CD8-positive, alpha-beta T cell (primary cell): ENCODE measurements at regions of chr12 and their contacts with region 1.

Region 1: GRCh38 chr12:47111392-47111778 is 31.6 kb upstream of the AMIGO2 start:
- DNase-seq: peak in 2 of 9 experiments; percentile 21 to 48
- ATAC-seq: peak; percentile 34
- H3K4me3 ChIP-seq: no peak overlapping the region
- H3K4me3 Mint-ChIP-seq: peak overlapping the region; percentile 53
- H3K27ac ChIP-seq: no peak overlapping the region
- H3K27ac Mint-ChIP-seq: peak overlapping the region; percentile 61
- H3K4me1 ChIP-seq: peaks cover 17% of the 10 kb centered on the region
- H3K4me1 Mint-ChIP-seq: peaks cover 31% of the 10 kb centered on the region
- H3K27me3 ChIP-seq: no peaks in the 10 kb centered on the region
- H3K27me3 Mint-ChIP-seq: no peaks in the 10 kb centered on the region
- CTCF ChIP-seq: no peak

Region 2: GRCh38 chr12:47071241-47071852 is 40.0 kb before region 1 on chr12:
- CTCF ChIA-PET with region 1: no interaction called
- POLR2A ChIA-PET with region 1: no interaction called
- intact Hi-C with region 1: loop called in 1 of 2 experiments (anchors 5 kb)
- DNase-seq: peak in 3 of 9 experiments; percentile 18 to 60 (median 46)
- ATAC-seq: peak; percentile 59
- H3K4me3 ChIP-seq: no peak overlapping the region
- H3K4me3 Mint-ChIP-seq: no peak overlapping the region
- H3K27ac ChIP-seq: no peak overlapping the region
- H3K27ac Mint-ChIP-seq: no peak overlapping the region
- H3K4me1 ChIP-seq: no peaks in the 10 kb centered on the region
- H3K4me1 Mint-ChIP-seq: peaks cover 9% of the 10 kb centered on the region
- H3K27me3 ChIP-seq: no peaks in the 10 kb centered on the region
- H3K27me3 Mint-ChIP-seq: no peaks in the 10 kb centered on the region
- CTCF ChIP-seq: peak; percentile 57

Region 3: DNA sequence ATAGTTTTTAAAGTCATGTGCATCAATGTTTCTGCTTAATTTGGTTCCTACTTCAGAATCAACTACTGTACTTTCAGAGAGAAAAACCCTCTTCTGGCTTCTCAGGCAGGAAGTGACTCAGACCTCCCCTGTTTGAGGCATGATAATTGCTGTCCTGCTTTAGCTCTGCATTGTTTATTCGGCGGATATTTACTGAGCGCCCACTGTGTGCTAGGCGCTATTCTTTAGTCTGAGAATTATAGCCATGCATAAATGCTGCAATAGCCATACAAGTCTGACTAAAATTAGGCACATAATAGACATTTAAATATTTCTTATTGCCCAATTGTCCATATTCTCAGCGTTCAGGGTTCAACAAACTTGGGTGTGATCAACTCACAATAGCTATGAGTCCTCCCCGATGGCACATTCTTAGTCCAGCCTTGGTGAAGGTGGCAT is 25.6 kb before region 1 on chr12:
- CTCF ChIA-PET with region 1: no interaction called
- POLR2A ChIA-PET with region 1: no interaction called
- intact Hi-C with region 1: no loop called
- DNase-seq: peak in 7 of 9 experiments; percentile 34 to 81 (median 44)
- ATAC-seq: peak; percentile 88
- H3K4me3 ChIP-seq: no peak overlapping the region
- H3K4me3 Mint-ChIP-seq: peak overlapping the region; percentile 3
- H3K27ac ChIP-seq: peak overlapping the region in 1 of 2 experiments; percentile 63
- H3K27ac Mint-ChIP-seq: peak overlapping the region; percentile 49
- H3K4me1 ChIP-seq: peaks cover 50% of the 10 kb centered on the region
- H3K4me1 Mint-ChIP-seq: peaks cover 67% of the 10 kb centered on the region
- H3K27me3 ChIP-seq: no peaks in the 10 kb centered on the region
- H3K27me3 Mint-ChIP-seq: no peaks in the 10 kb centered on the region
- CTCF ChIP-seq: no peak

Region 4: DNA sequence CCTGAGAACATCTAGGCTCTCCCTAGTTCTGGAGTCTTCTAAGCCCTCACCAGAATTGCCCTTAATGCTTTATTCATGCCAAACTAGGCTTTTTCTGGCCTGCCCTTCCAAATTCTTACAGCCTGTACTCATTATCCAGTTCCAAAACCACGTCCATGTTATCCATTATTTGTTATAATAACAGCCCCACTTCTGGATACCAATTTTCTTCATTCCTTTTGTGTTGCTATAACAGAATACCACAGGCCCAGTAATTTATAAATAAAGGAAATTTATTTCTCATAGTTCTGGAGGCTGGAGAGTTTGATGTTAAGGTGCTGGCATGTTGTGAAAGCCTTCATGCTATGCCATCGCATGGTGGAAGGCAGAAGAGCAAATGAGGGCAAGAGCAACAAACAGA is 36.4 kb after region 1 on chr12:
- CTCF ChIA-PET with region 1: no interaction called
- POLR2A ChIA-PET with region 1: interaction called, 3 read pairs
- intact Hi-C with region 1: loop called in 1 of 2 experiments (anchors 5 kb)
- DNase-seq: no peak
- ATAC-seq: no peak
- H3K4me3 ChIP-seq: no peak overlapping the region
- H3K4me3 Mint-ChIP-seq: no peak overlapping the region
- H3K27ac ChIP-seq: no peak overlapping the region
- H3K27ac Mint-ChIP-seq: no peak overlapping the region
- H3K4me1 ChIP-seq: peaks cover 14% of the 10 kb centered on the region
- H3K4me1 Mint-ChIP-seq: peaks cover 32% of the 10 kb centered on the region
- H3K27me3 ChIP-seq: no peaks in the 10 kb centered on the region
- H3K27me3 Mint-ChIP-seq: no peaks in the 10 kb centered on the region
- CTCF ChIP-seq: no peak

Region 5: DNA sequence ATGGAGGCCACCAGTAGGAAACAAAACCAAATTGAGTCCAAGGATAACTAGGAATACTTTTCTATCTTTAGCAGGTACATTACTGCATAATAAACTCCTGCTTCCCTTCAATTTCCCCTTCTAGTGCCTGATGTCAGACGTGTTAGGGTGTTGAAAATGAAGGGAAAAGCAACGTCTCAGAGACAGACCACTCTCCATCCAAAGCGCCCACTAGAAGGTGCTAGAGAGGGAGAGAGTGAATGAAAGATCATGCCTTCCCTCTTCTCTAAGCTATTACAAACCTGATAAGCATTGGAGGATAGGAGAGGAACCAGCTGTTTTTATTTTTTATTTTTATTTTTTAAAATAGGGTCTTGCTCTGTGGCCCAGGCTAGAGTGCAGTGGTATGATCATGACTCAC is 1175.3 kb after region 1 on chr12:
- CTCF ChIA-PET with region 1: no interaction called
- POLR2A ChIA-PET with region 1: no interaction called
- intact Hi-C with region 1: no loop called
- DNase-seq: peak in 2 of 9 experiments; percentile 19 to 37
- ATAC-seq: peak; percentile 30
- H3K4me3 ChIP-seq: no peak overlapping the region
- H3K4me3 Mint-ChIP-seq: no peak overlapping the region
- H3K27ac ChIP-seq: peak overlapping the region; percentile 10 to 36
- H3K27ac Mint-ChIP-seq: peak overlapping the region; percentile 81
- H3K4me1 ChIP-seq: peaks cover 13% of the 10 kb centered on the region
- H3K4me1 Mint-ChIP-seq: peaks cover 20% of the 10 kb centered on the region
- H3K27me3 ChIP-seq: no peaks in the 10 kb centered on the region
- H3K27me3 Mint-ChIP-seq: peaks cover 3% of the 10 kb centered on the region
- CTCF ChIP-seq: no peak

Region 6: DNA sequence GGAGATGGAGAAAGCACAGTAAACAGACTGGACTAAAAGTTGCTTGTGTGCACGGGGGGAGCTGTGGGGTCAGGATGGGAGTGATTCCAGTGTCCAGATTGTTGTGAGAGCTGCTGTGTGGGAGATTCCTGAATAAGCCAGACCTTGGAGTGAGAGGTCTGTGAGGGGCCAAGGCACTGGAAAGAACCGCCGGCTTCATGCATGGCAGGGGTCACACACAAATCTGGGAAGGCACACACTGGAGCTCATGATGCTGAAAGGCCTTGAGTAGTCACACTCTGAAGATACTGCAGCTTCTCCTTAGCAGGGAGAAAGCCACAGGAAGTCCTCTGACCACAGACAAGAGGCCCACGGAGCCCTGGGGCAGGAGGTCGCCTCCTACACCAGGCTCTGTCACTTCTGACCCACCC is 1654.4 kb after region 1 on chr12:
- CTCF ChIA-PET with region 1: no interaction called
- POLR2A ChIA-PET with region 1: no interaction called
- intact Hi-C with region 1: no loop called
- DNase-seq: peak in 2 of 9 experiments; percentile 17 to 19
- ATAC-seq: no peak
- H3K4me3 ChIP-seq: no peak overlapping the region
- H3K4me3 Mint-ChIP-seq: no peak overlapping the region
- H3K27ac ChIP-seq: no peak overlapping the region
- H3K27ac Mint-ChIP-seq: no peak overlapping the region
- H3K4me1 ChIP-seq: peaks cover 5% of the 10 kb centered on the region
- H3K4me1 Mint-ChIP-seq: peaks cover 9% of the 10 kb centered on the region
- H3K27me3 ChIP-seq: peaks cover 0 to 3% of the 10 kb centered on the region in 2 experiments
- H3K27me3 Mint-ChIP-seq: peaks cover 6% of the 10 kb centered on the region
- CTCF ChIP-seq: no peak